Activated CD8-positive, alpha-beta T cell treated with anti-CD3 and anti-CD28 coated beads for 36 hours (primary cell): ENCODE measurements at regions of chr17 and their contacts with region 1.

Region 1: DNA sequence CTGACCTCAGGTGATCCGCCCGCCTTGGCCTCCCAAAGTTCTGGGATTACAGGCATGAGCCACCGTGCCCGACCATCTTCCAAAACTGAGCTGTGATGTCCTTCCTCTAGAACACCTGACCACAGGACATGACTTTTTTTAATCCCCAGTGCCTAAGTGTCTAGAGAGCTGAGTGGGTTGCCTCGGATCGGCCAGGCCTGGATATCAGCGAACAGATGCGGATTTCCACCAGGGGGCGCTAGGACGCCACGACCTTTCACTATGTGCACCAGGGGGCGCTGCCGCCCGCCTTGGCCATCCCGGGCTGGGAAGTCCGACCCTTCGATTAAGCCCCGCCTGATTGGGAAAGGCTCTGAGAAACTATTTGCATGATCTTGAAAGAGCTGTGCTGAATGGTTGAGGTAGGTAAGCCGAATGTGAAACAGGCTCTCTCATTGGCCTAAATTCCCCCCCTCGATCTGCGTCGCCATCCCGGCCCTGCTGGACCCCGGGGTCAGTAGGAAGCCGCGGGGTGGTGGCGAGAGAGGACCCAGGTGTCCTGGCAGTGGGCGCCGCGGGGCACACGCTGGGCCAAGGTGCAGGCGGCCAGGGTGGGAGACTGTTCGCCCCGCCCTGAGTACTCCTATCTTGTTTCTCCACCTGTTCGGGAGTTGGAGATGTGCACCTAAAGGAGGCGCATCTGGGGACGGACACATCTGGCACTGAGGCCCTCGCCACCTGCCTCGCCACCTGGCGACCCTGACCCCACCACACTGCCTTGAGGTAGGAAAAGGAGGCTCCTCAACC is at the start of gene ACBD4:
- DNase-seq: peak; percentile 98
- ATAC-seq: peak; percentile 89
- H3K4me3 Mint-ChIP-seq: peak within 1 kb of the TSS; percentile 88
- H3K27ac Mint-ChIP-seq: peak within 1 kb of the TSS; percentile 86
- H3K4me1 Mint-ChIP-seq: peaks cover 12% of the 10 kb centered on the region
- H3K27me3 Mint-ChIP-seq: no peaks in the 10 kb centered on the region
- CTCF ChIP-seq: peak; percentile 100
- total RNA-seq, gene ACBD4: 12.4 to 12.6 TPM

Region 2: GRCh38 chr17:44988044-44988942 is 147.1 kb before region 1 on chr17:
- CTCF ChIA-PET with region 1: no interaction called
- POLR2A ChIA-PET with region 1: no interaction called
- intact Hi-C with region 1: no loop called
- DNase-seq: no peak
- ATAC-seq: no peak
- H3K4me3 Mint-ChIP-seq: no peak overlapping the region
- H3K27ac Mint-ChIP-seq: no peak overlapping the region
- H3K4me1 Mint-ChIP-seq: peaks cover 10% of the 10 kb centered on the region
- H3K27me3 Mint-ChIP-seq: peaks cover 35% of the 10 kb centered on the region
- CTCF ChIP-seq: no peak

Region 3: DNA sequence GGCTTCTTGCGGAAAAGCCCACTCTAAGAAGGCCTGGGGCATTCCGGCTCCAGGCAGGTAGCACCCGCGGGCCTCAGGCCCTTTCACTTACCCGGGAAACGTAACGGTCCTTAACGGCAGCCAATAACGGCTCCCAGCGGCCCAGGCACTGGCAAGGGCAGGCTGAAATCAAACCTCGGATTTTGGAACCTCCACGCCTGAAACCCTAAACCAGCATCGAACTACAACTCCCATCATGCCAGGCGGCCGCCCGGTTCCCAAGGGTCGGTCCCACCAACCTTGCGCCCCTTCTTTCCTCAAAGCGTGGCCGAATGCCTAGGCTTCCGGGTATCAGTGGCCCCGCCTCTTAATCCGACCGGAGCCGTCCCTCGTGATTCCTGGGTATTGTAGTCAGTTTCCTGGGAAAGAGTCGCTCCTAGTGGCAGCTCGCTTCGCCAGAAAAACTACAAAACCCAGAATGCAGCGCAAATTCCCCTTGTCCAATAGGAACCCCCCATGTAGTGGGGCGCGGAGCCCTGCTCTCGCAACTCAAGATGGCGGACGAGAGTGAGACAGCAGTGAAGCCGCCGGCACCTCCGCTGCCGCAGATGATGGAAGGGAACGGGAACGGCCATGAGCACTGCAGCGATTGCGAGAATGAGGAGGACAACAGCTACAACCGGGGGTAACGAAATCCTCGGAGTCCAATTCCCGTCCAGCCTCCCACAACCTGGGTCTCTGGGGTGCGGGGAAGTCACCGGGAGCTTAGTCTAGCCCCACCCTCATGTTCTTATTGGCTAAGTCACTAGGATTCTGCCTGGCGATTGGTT is 74.4 kb before region 1 on chr17 and contains the start of gene NMT1:
- CTCF ChIA-PET with region 1: interaction called, 16 read pairs
- POLR2A ChIA-PET with region 1: no interaction called
- intact Hi-C with region 1: no loop called
- DNase-seq: peak; percentile 99
- ATAC-seq: peak; percentile 92
- H3K4me3 Mint-ChIP-seq: peak within 1 kb of the TSS; percentile 89
- H3K27ac Mint-ChIP-seq: peak within 1 kb of the TSS; percentile 94
- H3K4me1 Mint-ChIP-seq: peaks cover 37% of the 10 kb centered on the region
- H3K27me3 Mint-ChIP-seq: no peaks in the 10 kb centered on the region
- CTCF ChIP-seq: no peak
- total RNA-seq, gene NMT1: 156 to 169 TPM

Region 4: GRCh38 chr17:45148183-45149036 is 13.0 kb after region 1 on chr17 and contains the start of gene HEXIM1:
- CTCF ChIA-PET with region 1: interaction called, 352 read pairs
- POLR2A ChIA-PET with region 1: interaction called, 64 read pairs
- intact Hi-C with region 1: loop called (anchors 2 kb)
- DNase-seq: peak; percentile 99
- ATAC-seq: peak; percentile 82
- H3K4me3 Mint-ChIP-seq: peak within 1 kb of the TSS; percentile 98
- H3K27ac Mint-ChIP-seq: peak within 1 kb of the TSS; percentile 100
- H3K4me1 Mint-ChIP-seq: peaks cover 40% of the 10 kb centered on the region
- H3K27me3 Mint-ChIP-seq: no peaks in the 10 kb centered on the region
- CTCF ChIP-seq: no peak
- total RNA-seq, gene HEXIM1: 22.6 to 23.5 TPM

Region 5: GRCh38 chr17:45190503-45191255 is 55.3 kb after region 1 on chr17:
- CTCF ChIA-PET with region 1: interaction called, 369 read pairs
- POLR2A ChIA-PET with region 1: interaction called, 6 read pairs
- intact Hi-C with region 1: no loop called
- DNase-seq: no peak
- ATAC-seq: no peak
- H3K4me3 Mint-ChIP-seq: no peak overlapping the region
- H3K27ac Mint-ChIP-seq: no peak overlapping the region
- H3K4me1 Mint-ChIP-seq: no peaks in the 10 kb centered on the region
- H3K27me3 Mint-ChIP-seq: no peaks in the 10 kb centered on the region
- CTCF ChIP-seq: no peak

Region 6: GRCh38 chr17:45235416-45236281 is 100.3 kb after region 1 on chr17:
- CTCF ChIA-PET with region 1: interaction called, 52 read pairs
- POLR2A ChIA-PET with region 1: no interaction called
- intact Hi-C with region 1: no loop called
- DNase-seq: peak; percentile 92
- ATAC-seq: peak; percentile 63
- H3K4me3 Mint-ChIP-seq: no peak overlapping the region
- H3K27ac Mint-ChIP-seq: peak overlapping the region; percentile 99
- H3K4me1 Mint-ChIP-seq: peaks cover 55% of the 10 kb centered on the region
- H3K27me3 Mint-ChIP-seq: no peaks in the 10 kb centered on the region
- CTCF ChIP-seq: peak; percentile 76

Region 7: DNA sequence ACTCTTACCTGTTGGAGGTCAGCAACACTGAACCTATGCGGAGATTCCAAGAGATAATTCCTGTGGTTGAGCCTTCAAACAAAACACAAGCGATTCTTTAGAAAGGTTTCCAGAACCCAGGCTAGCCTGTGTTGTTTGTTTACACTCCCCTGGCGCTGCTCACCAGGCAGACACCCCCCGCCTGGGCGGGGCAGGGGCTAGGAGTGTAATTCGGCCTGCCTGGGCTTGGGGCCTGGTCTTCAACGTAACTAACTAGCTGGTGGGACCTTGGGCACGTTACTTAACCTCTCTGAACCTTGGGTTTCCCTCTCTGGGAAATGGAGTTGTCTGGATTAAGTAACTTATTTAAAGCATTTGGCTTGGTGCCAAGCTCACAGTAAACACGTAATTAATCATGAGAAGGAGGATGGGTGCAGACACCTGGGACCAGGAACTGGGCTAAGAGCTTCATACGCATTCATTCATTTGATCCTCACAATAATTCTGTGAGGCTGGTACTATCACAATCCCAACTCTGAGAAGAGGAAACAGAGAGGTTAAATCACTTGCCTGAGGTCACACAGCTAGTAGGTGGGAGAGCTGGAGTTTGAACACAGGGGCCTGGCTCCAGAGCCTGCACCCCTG is 304.9 kb after region 1 on chr17:
- CTCF ChIA-PET with region 1: no interaction called
- POLR2A ChIA-PET with region 1: no interaction called
- intact Hi-C with region 1: no loop called
- DNase-seq: no peak
- ATAC-seq: no peak
- H3K4me3 Mint-ChIP-seq: no peak overlapping the region
- H3K27ac Mint-ChIP-seq: peak overlapping the region; percentile 64
- H3K4me1 Mint-ChIP-seq: peaks cover 18% of the 10 kb centered on the region
- H3K27me3 Mint-ChIP-seq: no peaks in the 10 kb centered on the region
- CTCF ChIP-seq: no peak